Activated CD8-positive, alpha-beta T cell treated with anti-CD3 and anti-CD28 coated beads, Interleukin-2, amount 10 ng/mL, durations not matched to agents 7 days and 5 days (primary cell): ENCODE measurements at regions of chr3 and their contacts with region 1.

Region 1: GRCh38 chr3:157136647-157137387 is 23.1 kb downstream of the CCNL1 start:
- DNase-seq: no peak
- ATAC-seq: peak; percentile 3
- H3K4me3 Mint-ChIP-seq: no peak overlapping the region
- H3K27ac Mint-ChIP-seq: peak overlapping the region; percentile 64
- H3K4me1 Mint-ChIP-seq: peaks cover 59% of the 10 kb centered on the region
- H3K27me3 Mint-ChIP-seq: no peaks in the 10 kb centered on the region

Region 2: DNA sequence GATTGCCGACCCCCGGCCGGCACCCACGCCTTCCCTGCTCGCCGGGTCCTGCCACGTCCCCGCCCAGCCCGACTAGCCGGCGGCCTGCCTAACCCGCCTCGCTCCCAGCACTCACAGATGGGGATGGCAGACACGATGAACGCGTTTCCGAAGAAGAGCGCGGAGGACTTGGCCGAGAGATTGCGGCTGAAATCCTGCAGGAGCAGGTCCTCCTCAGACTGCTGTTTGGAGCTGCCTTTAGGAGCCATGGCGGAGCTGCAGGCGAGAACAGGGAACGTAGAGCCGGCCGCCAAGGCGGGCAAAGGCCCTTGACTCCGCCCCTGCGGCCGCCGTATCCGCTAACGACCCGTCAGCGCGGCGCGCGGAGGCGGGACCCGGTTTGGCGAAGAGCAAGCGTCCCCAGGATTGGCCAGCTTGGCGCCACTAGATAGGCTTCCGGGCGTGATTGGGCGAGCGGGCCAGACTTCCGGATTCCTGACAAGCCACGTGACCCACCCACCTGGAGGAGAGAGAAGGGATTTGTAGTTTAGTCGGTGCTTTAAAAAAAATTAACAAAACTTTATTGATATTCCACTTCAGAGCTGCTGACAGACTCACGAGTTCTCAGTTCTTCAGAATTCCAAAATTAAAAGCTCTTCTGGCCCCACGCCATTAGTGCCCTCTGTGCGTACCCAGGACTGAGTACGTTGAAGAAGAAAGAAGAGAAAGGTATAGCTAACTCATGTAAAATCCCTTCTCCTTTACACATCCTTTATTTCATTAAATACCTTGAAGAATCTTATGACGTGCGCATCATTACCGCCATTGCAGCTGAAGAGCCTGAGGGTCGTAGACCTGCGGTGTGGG is 581.8 kb before region 1 on chr3 and contains the start of gene SSR3:
- CTCF ChIA-PET with region 1: interaction called, 22 read pairs
- POLR2A ChIA-PET with region 1: interaction called, 3 read pairs
- DNase-seq: peak; percentile 99
- ATAC-seq: peak; percentile 100
- H3K4me3 Mint-ChIP-seq: peak within 1 kb of the TSS; percentile 97
- H3K27ac Mint-ChIP-seq: peak within 1 kb of the TSS; percentile 93
- H3K4me1 Mint-ChIP-seq: peaks cover 49% of the 10 kb centered on the region
- H3K27me3 Mint-ChIP-seq: no peaks in the 10 kb centered on the region
- total RNA-seq, gene SSR3: 133 to 147 TPM

Region 3: GRCh38 chr3:157081681-157082210 is 55.1 kb before region 1 on chr3:
- CTCF ChIA-PET with region 1: interaction called, 301 read pairs
- POLR2A ChIA-PET with region 1: interaction called, 3 read pairs
- DNase-seq: peak; percentile 87
- ATAC-seq: peak; percentile 95
- H3K4me3 Mint-ChIP-seq: no peak overlapping the region
- H3K27ac Mint-ChIP-seq: peak overlapping the region; percentile 53
- H3K4me1 Mint-ChIP-seq: peaks cover 28% of the 10 kb centered on the region
- H3K27me3 Mint-ChIP-seq: no peaks in the 10 kb centered on the region

Region 4: GRCh38 chr3:157113832-157114505 is 22.8 kb before region 1 on chr3:
- CTCF ChIA-PET with region 1: interaction called, 21 read pairs
- POLR2A ChIA-PET with region 1: no interaction called
- DNase-seq: no peak
- ATAC-seq: no peak
- H3K4me3 Mint-ChIP-seq: no peak overlapping the region
- H3K27ac Mint-ChIP-seq: no peak overlapping the region
- H3K4me1 Mint-ChIP-seq: peaks cover 8% of the 10 kb centered on the region
- H3K27me3 Mint-ChIP-seq: peaks cover 3% of the 10 kb centered on the region

Region 5: GRCh38 chr3:157148196-157148889 is 11.5 kb after region 1 on chr3:
- CTCF ChIA-PET with region 1: interaction called, 57 read pairs
- POLR2A ChIA-PET with region 1: interaction called, 6 read pairs
- DNase-seq: no peak
- ATAC-seq: no peak
- H3K4me3 Mint-ChIP-seq: no peak overlapping the region
- H3K27ac Mint-ChIP-seq: no peak overlapping the region
- H3K4me1 Mint-ChIP-seq: peaks cover 41% of the 10 kb centered on the region
- H3K27me3 Mint-ChIP-seq: no peaks in the 10 kb centered on the region